Natural killer cell (primary cell): ENCODE measurements at regions of chr10 and their contacts with region 1.

Region 1: DNA sequence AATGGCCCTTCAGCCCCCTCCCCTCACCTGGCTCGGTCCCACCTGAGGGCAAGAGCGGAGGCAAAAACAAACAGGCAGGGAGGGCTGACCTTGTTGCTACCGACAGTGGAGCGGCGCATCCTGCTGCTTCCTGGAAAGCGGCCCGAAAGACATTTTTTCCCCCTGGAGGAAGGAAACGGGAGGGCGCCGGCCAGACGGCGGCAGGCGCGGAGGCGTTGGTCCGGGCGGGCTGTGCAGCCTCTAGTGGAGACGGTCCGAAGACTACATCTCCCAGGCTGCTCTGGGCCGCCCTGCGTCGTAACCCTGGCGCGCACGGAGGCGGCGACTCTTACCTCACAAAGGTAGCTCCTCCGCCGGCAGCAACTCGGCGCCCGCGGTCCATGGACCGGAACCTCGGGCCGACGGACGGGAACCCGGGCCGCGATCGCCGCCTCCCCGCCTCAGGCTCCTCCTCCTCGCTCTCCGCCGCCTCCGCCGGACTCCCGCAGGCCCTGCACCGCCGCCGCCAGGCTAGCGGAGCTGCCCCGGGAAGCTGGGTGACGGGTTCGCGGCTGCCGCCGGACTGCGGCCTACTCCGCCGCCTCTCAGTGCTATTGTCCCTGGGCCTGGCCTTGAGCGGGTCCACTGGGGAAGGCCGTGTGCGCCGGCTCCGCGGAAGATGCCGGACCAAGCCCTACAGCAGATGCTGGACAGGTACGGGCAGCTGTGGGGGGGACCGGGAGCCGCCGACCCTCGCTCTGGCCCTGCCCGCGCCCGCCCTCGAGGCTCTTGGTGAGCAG is at the starts of genes CPEB3 and MARCHF5:
- DNase-seq: peak; percentile 87 to 95
- ATAC-seq: peak; percentile 93 to 99 (median 96)
- H3K4me3 ChIP-seq: peak within 1 kb of the TSS; percentile 85
- H3K4me3 Mint-ChIP-seq: peak within 1 kb of the TSS; percentile 95
- H3K27ac ChIP-seq: peak within 1 kb of the TSS; percentile 88
- H3K27ac Mint-ChIP-seq: peak within 1 kb of the TSS; percentile 84 to 91
- H3K4me1 ChIP-seq: peaks cover 15% of the 10 kb centered on the region
- H3K4me1 Mint-ChIP-seq: peaks cover 23 to 28% of the 10 kb centered on the region in 2 donors
- H3K27me3 ChIP-seq: no peaks in the 10 kb centered on the region
- H3K27me3 Mint-ChIP-seq: no peaks in the 10 kb centered on the region
- CTCF ChIP-seq: peak; percentile 31
- total RNA-seq, gene CPEB3: 3.6 to 6.9 (median 5.4) TPM
- total RNA-seq, gene MARCHF5: 28.0 to 38.6 (median 32.9) TPM

Region 2: GRCh38 chr10:91797874-91798648 is 493.0 kb before region 1 on chr10 and contains the start of gene TNKS2:
- intact Hi-C with region 1: loop called (anchors 10 kb)
- DNase-seq: peak; percentile 92 to 97
- ATAC-seq: peak; percentile 77 to 91 (median 88)
- H3K4me3 ChIP-seq: peak within 1 kb of the TSS; percentile 95
- H3K4me3 Mint-ChIP-seq: peak within 1 kb of the TSS; percentile 97
- H3K27ac ChIP-seq: peak within 1 kb of the TSS; percentile 93
- H3K27ac Mint-ChIP-seq: peak within 1 kb of the TSS; percentile 97
- H3K4me1 ChIP-seq: peaks cover 6% of the 10 kb centered on the region
- H3K4me1 Mint-ChIP-seq: peaks cover 68 to 72% of the 10 kb centered on the region in 2 donors
- H3K27me3 ChIP-seq: no peaks in the 10 kb centered on the region
- H3K27me3 Mint-ChIP-seq: no peaks in the 10 kb centered on the region
- CTCF ChIP-seq: no peak
- total RNA-seq, gene TNKS2: 47.0 to 50.9 (median 47.9) TPM

Region 3: GRCh38 chr10:92087750-92088395 is 203.2 kb before region 1 on chr10:
- intact Hi-C with region 1: loop called (anchors 2 kb)
- DNase-seq: peak; percentile 22 to 68
- ATAC-seq: peak; percentile 74 to 94 (median 89)
- H3K4me3 ChIP-seq: no peak overlapping the region
- H3K4me3 Mint-ChIP-seq: no peak overlapping the region
- H3K27ac ChIP-seq: no peak overlapping the region
- H3K27ac Mint-ChIP-seq: no peak overlapping the region
- H3K4me1 ChIP-seq: no peaks in the 10 kb centered on the region
- H3K4me1 Mint-ChIP-seq: peaks cover 5% of the 10 kb centered on the region in 2 donors
- H3K27me3 ChIP-seq: no peaks in the 10 kb centered on the region
- H3K27me3 Mint-ChIP-seq: no peaks in the 10 kb centered on the region
- CTCF ChIP-seq: peak; percentile 61

Region 4: DNA sequence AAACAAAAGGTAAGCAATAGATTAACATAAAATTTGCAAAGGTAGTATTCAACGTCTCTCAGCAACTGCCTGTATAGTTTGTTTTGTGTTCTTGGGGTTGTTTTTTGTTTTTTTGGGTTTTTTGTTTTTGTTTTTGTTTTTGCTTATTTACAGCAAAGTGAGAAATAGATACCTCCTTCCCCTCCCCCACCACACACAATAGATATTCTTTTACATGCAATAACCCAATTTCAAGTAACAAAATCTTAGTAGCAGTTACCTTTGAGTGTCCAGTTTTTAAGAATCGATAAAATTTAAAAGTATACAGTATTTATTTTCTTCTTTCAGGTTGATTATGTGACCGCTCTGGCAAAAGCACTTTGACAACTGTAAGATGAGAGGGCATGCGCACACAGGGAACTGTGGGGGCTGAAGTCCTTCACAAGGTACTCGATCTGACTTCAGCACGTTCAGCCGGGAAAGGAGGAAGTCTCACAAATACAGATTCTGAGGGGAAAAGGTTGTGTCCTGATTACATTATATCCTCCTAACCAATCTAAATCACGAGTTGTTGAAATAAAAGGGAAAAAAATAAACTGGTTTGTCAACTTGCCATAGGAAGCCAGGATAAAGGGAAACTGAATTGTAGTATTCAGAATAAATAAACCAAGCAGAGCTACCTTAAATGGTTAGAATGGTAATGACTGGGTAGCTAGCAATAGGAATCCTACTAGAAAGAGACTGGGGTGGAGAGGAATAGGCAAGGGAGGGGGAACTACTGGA is 47.9 kb before region 1 on chr10:
- intact Hi-C with region 1: loop called (anchors 2 kb)
- DNase-seq: peak in 1 of 2 donors; percentile 67
- ATAC-seq: peak; percentile 50 to 65 (median 51)
- H3K4me3 ChIP-seq: no peak overlapping the region
- H3K4me3 Mint-ChIP-seq: peak overlapping the region; percentile 93
- H3K27ac ChIP-seq: no peak overlapping the region
- H3K27ac Mint-ChIP-seq: peak overlapping the region; percentile 75 to 80
- H3K4me1 ChIP-seq: peaks cover 14% of the 10 kb centered on the region
- H3K4me1 Mint-ChIP-seq: peaks cover 42 to 46% of the 10 kb centered on the region in 2 donors
- H3K27me3 ChIP-seq: no peaks in the 10 kb centered on the region
- H3K27me3 Mint-ChIP-seq: no peaks in the 10 kb centered on the region
- CTCF ChIP-seq: no peak